Colonic mucosa (tissue), 4 donors: ENCODE measurements at regions of chr5 and their contacts with region 1.

Region 1: GRCh38 chr5:157718519-157718918 is 12.7 kb upstream of the THG1L start:
- DNase-seq: peak; percentile 36
- H3K4me3 ChIP-seq: no peak overlapping the region
- H3K27ac ChIP-seq: no peak overlapping the region
- H3K4me1 ChIP-seq: no peaks in the 10 kb centered on the region
- H3K27me3 ChIP-seq: no peaks in the 10 kb centered on the region
- CTCF ChIP-seq: peak; percentile 52

Region 2: DNA sequence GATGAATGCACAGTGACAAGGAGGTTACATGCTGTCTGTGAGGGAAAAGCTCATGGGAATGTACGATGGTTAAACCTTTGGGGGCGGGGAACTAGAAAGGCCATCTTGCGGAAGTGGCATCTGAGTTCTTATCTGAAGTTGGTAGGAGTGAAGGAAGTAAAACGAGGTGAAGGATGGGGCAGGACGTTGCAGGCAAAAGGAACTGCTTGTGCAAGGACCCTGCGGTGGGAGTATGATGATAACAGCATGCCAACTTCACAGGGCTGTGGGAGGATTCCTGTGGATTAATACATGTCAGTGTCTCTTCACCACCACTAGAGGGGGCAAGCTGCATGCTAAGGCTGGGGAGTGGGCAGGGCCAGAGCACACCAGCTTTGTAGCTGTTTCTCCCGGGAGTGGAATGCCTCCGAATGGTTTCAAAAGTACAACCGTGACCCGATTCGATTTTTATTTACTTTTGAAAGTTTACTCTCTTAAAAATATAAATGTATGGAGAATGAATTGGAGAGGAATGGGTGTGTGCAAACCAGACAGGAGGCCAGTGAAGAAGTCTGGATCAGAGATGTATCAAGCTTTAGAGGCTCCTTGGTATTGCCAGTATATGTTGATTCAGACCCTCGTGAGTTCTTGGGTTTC is 390.1 kb before region 1 on chr5:
- intact Hi-C with region 1: loop called (anchors 10 kb)
- DNase-seq: peak; percentile 49
- H3K4me3 ChIP-seq: no peak overlapping the region
- H3K27ac ChIP-seq: no peak overlapping the region
- H3K4me1 ChIP-seq: no peaks in the 10 kb centered on the region
- H3K27me3 ChIP-seq: no peaks in the 10 kb centered on the region
- CTCF ChIP-seq: peak; percentile 88

Region 3: DNA sequence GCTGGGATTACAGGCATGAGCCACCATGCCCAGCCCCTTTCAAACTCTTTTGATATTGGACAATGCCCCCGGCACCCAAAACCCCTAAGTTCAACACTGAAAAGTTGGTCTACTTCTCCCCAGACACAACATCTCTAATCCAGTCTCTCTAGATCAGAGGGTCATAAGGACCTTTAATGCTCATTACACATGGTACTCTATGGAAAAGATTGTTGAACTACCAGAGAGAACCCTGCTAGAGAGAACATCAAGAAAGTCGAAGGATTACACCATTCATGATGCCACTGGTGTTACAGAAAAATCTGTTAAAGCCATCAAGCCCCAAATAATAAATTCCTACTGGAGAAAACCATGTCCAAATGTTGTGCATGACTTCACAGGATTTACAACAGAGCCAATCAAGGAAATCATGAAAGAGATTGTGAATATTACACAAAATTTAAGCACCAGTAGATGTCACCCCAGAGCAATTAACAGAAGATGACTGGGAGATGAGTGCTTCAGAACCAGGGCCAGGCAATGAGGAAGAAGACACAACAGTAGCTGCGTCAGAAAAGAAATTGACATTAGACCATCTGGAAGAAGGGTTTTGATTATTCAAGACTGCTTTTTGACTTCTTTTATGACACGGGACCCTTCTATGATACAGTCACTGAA is 286.8 kb before region 1 on chr5:
- intact Hi-C with region 1: loop called (anchors 5 kb)
- DNase-seq: peak; percentile 36
- H3K4me3 ChIP-seq: no peak overlapping the region
- H3K27ac ChIP-seq: no peak overlapping the region
- H3K4me1 ChIP-seq: no peaks in the 10 kb centered on the region
- H3K27me3 ChIP-seq: no peaks in the 10 kb centered on the region
- CTCF ChIP-seq: peak; percentile 32

Region 4: GRCh38 chr5:157582731-157583620 is 135.5 kb before region 1 on chr5:
- intact Hi-C with region 1: no loop called
- DNase-seq: no peak
- H3K4me3 ChIP-seq: no peak overlapping the region
- H3K27ac ChIP-seq: no peak overlapping the region
- H3K4me1 ChIP-seq: no peaks in the 10 kb centered on the region
- H3K27me3 ChIP-seq: no peaks in the 10 kb centered on the region
- CTCF ChIP-seq: no peak

Region 5: DNA sequence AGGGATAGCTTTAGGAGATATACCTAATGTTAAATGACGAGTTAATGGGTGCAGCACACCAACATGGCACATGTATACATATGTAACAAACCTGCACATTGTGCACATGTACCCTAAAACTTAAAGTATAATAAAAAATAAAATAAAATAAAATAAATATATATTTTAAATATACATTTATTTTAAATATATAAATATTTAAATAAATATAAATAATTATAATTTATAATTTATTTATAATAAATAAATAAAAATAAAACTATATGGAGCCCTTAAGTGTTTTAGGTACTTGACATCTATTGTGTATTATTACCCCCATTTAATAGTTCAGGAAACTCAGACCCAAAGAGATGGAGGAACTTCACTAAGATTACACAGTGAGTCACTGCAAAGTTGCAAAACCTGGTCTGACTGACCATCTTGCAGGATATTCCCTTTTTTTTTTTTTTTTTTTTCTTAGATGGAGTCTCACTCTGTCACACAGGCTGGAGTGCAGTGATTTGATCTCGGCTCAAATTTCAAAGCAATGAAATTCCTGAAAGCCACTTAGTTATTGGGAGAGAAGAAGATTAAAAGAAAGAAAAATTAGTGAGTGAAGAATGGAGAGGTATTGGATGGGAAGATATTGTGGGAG is 52.9 kb before region 1 on chr5:
- intact Hi-C with region 1: loop called (anchors 5 kb)
- DNase-seq: no peak
- H3K4me3 ChIP-seq: no peak overlapping the region
- H3K27ac ChIP-seq: no peak overlapping the region
- H3K4me1 ChIP-seq: peaks cover 6% of the 10 kb centered on the region
- H3K27me3 ChIP-seq: no peaks in the 10 kb centered on the region
- CTCF ChIP-seq: no peak